AG04450 (cell line): ENCODE measurements at regions of chr14 and their contacts with region 1.

Region 1: DNA sequence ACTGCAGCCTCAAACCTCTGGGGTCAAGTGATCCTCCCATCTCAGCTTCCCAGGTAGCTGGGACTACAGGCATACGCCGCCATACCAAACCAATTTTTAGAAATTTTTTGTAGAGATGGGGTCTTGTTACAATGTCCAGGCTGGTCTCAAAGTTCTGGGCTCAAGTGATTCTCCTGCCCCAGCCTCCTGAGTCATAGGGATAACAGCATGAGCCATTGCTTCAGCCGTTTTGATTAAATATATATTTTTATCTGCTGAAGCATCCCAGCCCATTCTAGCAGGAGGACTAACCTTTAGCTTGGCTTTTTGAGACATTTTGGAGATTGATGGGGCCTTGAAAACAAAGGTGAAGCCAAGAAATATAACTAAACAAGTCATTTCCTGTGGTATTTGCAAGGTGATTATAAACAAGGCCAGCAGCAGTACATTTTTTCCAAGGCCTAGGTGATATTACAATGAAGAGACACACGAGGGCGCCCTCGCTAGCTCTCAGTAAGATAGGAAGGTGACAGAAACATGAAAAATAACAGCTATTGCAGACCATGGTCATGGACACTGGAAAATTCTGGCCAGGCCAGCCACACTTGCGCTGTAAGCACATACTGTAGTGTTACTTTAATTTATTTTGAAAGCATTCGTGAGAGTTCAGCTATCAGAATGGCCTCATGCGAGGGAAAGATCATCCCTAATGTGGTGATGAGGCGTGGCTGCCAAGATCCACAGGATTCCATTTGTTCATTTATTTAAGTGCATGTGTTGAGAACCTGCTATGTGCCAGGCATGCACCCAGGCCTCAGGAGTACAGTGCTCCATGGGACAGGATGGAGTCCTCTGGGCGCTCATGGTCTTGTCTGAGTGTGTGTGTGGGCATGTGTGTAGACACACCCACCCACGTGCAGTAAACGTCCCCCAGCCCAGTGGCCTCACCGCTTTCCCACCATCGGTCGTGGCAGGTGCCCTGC is 63.5 kb downstream of the DGLUCY start:
- DNase-seq: no peak
- H3K4me3 ChIP-seq: no peak overlapping the region
- H3K27ac ChIP-seq: no peak overlapping the region
- H3K27me3 ChIP-seq: no peaks in the 10 kb centered on the region
- CTCF ChIP-seq: peak; percentile 83

Region 2: DNA sequence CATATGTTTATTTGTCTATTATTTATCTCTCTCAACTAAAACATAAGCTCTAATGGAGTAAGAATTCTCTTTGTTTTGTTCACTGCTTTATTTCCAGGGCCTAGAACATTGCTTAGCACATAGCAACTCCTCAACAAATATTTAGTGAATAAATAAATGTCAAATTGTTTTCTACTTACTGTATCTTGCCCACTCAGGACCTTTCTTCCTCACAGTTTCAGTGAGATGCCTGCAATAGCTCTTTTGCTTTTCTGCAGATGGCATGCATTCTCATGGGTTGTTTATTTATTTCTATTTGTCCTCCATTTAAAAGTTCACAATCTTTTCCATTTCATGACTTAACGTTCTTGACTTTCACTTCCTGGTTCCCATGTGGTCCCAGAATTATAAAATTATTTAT is 266.2 kb before region 1 on chr14:
- CTCF ChIA-PET with region 1: interaction called, 28 read pairs
- POLR2A ChIA-PET with region 1: no interaction called
- DNase-seq: no peak
- H3K4me3 ChIP-seq: no peak overlapping the region
- H3K27ac ChIP-seq: no peak overlapping the region
- H3K27me3 ChIP-seq: no peaks in the 10 kb centered on the region
- CTCF ChIP-seq: no peak

Region 3: DNA sequence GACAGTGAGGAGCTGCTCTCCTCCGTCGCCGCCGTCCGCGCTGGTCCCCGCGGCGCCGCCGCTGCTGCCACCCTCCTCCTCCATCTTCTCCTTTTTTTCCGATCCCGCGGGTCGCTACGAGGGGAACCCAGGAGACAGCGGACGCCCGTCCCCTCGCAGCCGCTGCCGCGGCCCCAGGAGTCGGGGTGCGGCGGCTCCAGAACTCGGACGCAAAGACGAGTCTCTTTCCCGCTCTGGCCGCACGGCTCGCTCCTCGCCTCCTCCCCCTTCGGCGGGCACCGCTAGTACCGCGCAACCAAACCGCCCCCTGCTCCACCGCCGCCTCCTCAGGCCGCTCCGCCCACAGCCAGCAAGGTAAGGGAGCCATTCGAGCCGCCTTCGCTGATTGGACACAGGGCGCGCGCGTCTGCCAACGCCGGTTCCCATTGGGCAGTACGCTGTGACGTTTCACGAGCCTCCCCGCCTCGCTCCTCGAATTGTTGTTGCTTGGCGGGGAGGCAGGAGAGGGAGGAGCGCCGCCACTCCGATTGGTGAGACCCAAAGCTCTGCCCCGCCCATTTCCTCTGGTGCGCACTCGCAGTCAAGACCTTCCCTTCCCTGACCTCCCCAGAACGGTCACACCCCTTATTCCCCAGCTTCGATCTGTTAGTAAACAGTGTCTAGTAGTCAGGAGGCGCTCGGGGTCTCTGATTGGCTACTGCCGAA is 116.9 kb before region 1 on chr14 and contains the start of gene RPS6KA5:
- CTCF ChIA-PET with region 1: interaction called, 66 read pairs
- POLR2A ChIA-PET with region 1: no interaction called
- DNase-seq: peak; percentile 100
- H3K4me3 ChIP-seq: peak within 1 kb of the TSS; percentile 79
- H3K27ac ChIP-seq: peak within 1 kb of the TSS; percentile 47
- H3K27me3 ChIP-seq: no peaks in the 10 kb centered on the region
- CTCF ChIP-seq: 0 out of 2 replicates have a peak, but pooled peaks have one; percentile 13
- polyA plus RNA-seq, gene RPS6KA5: 1.1 and 1.5 TPM in 2 replicates

Region 4: GRCh38 chr14:91154851-91155625 is 22.3 kb before region 1 on chr14:
- CTCF ChIA-PET with region 1: interaction called, 40 read pairs
- POLR2A ChIA-PET with region 1: no interaction called
- DNase-seq: peak; percentile 20
- H3K4me3 ChIP-seq: no peak overlapping the region
- H3K27ac ChIP-seq: no peak overlapping the region
- H3K27me3 ChIP-seq: no peaks in the 10 kb centered on the region
- CTCF ChIP-seq: no peak

Region 5: GRCh38 chr14:91286530-91286937 is 109.2 kb after region 1 on chr14:
- CTCF ChIA-PET with region 1: interaction called, 350 read pairs
- POLR2A ChIA-PET with region 1: interaction called, 4 read pairs
- DNase-seq: peak; percentile 37
- H3K4me3 ChIP-seq: no peak overlapping the region
- H3K27ac ChIP-seq: no peak overlapping the region
- H3K27me3 ChIP-seq: no peaks in the 10 kb centered on the region
- CTCF ChIP-seq: peak; percentile 87